Activated CD4-positive, alpha-beta memory T cell treated with anti-CD3 and anti-CD28 coated beads, Interleukin-2, amount 10 ng/mL, durations not matched to agents 7 days and 5 days (primary cell): ENCODE measurements at regions of chr3 and their contacts with region 1.

Region 1: DNA sequence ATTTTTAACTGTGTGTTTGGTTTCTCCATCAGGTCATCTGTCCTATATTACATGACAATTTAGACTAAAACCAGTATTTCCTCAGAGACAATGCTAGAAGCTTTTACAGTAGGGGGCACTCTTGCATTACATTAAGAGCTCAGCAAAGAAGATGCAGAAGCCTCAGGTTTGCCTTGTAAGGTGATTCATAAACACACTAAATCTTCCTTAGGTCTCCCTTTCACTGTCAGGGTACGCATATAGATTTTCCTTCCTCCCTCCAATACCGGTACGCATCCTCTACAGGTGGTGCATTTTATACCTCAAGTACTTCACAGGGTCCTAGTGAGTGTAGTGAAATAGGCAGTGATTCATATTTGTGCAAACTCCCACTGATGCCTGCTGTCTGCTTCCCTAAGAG is 46.5 kb downstream of the CD86 start:
- DNase-seq: no peak
- H3K4me3 Mint-ChIP-seq: peak overlapping the region; percentile 25
- H3K27ac Mint-ChIP-seq: no peak overlapping the region
- H3K4me1 Mint-ChIP-seq: peaks cover 14% of the 10 kb centered on the region
- H3K27me3 Mint-ChIP-seq: no peaks in the 10 kb centered on the region

Region 2: GRCh38 chr3:121975702-121976302 is 125.8 kb before region 1 on chr3:
- CTCF ChIA-PET with region 1: no interaction called
- POLR2A ChIA-PET with region 1: no interaction called
- DNase-seq: no peak
- H3K4me3 Mint-ChIP-seq: no peak overlapping the region
- H3K27ac Mint-ChIP-seq: no peak overlapping the region
- H3K4me1 Mint-ChIP-seq: peaks cover 22% of the 10 kb centered on the region
- H3K27me3 Mint-ChIP-seq: no peaks in the 10 kb centered on the region

Region 3: DNA sequence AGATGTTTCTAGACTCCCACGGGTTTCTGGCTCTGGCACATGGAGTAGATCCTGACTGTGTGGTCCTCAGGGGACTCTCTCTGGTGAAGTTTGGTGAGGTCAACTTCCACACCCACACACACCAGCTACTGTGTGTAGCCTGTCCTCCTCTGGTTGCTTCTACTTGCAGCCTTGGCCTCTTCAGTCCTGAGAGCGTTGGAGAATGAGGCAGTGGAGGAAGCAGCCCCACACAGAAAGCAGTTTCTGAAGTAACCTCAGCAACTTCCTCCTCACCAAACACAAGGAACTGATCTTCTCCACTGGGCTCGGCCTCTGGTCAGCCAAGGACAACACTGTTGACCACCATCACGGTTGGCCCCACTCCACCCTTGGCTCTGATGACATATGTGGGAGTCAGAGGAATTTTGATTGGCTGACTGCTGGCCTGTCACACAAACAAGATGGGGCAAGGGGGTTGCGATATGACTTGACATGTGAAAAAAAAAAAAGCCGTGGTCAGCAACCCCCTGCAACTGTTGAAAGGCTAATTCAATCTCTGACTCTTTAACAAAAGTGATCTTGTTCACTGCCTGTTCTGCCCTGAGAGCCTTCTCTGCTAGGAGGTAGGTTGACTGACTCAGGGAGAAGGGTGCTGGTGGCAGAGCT is 26.9 kb before region 1 on chr3:
- CTCF ChIA-PET with region 1: interaction called, 68 read pairs
- POLR2A ChIA-PET with region 1: interaction called, 568 read pairs
- DNase-seq: peak; percentile 79
- H3K4me3 Mint-ChIP-seq: peak overlapping the region; percentile 84
- H3K27ac Mint-ChIP-seq: peak overlapping the region; percentile 95
- H3K4me1 Mint-ChIP-seq: peaks cover 64% of the 10 kb centered on the region
- H3K27me3 Mint-ChIP-seq: no peaks in the 10 kb centered on the region

Region 4: GRCh38 chr3:122245513-122246174 is 144.0 kb after region 1 on chr3:
- CTCF ChIA-PET with region 1: interaction called, 11 read pairs
- POLR2A ChIA-PET with region 1: interaction called, 4 read pairs
- DNase-seq: no peak
- H3K4me3 Mint-ChIP-seq: peak overlapping the region; percentile 74
- H3K27ac Mint-ChIP-seq: peak overlapping the region; percentile 62
- H3K4me1 Mint-ChIP-seq: peaks cover 25% of the 10 kb centered on the region
- H3K27me3 Mint-ChIP-seq: peaks cover 26% of the 10 kb centered on the region

Region 5: DNA sequence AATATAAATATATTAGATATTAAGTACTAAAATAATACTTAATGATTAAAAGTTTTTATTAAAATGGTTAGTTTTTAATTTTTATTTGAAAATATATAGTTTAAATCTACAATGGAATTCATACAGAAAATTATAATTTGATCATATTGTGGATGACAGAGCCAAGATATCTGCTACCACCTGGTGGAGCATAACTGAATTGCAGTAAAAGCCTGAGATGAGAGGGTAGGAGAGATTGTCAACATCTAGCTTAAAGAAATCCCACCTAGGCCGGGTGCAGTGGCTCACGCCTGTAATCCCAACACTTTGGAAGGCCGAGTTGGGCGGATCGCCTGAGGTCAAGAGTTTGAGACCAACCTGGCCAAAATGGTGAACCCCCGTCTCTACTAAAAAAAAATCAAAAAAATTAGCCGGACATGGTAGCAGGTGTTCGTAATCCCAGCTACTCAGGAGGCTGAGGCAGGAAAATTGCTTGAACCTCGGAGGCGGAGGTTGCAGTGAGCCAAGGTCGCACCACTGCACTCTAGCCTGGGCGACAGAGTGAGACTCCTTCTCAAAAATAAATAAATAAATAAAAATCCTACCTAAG is 198.3 kb after region 1 on chr3:
- CTCF ChIA-PET with region 1: interaction called, 34 read pairs
- POLR2A ChIA-PET with region 1: no interaction called
- DNase-seq: no peak
- H3K4me3 Mint-ChIP-seq: no peak overlapping the region
- H3K27ac Mint-ChIP-seq: no peak overlapping the region
- H3K4me1 Mint-ChIP-seq: peaks cover 18% of the 10 kb centered on the region
- H3K27me3 Mint-ChIP-seq: no peaks in the 10 kb centered on the region